Dorsolateral prefrontal cortex (tissue), 120 donors: ENCODE measurements at regions of chr16 and their contacts with region 1.

Region 1: DNA sequence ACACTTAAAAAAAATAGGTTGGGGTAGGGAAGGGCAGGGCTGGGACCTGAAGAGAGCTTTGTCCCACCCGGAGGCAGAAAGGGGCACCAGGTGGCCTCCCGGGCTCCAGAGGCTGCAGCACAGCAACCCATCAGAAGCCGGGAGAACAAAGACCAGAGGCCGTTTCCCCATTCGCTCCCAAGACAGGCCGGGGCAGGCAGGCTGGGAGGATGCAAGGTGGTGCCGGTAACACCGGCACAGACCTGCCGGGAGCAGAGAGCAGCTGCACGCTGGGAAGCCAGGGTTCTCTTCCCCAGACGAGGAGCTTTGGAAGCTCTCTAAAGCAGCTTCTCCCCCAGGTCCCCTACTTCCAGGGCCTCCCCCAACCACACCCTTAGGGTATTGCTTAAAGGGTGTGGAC is 5.6 kb downstream of the PPL start:
- DNase-seq: no peak
- H3K4me3 ChIP-seq: no peak overlapping the region
- H3K27ac ChIP-seq: no peak overlapping the region
- H3K27me3 ChIP-seq: peaks cover 0 to 11% (median 3%) of the 10 kb centered on the region in 45 donors
- CTCF ChIP-seq: no peak

Region 2: GRCh38 chr16:4859900-4860255 is 71.5 kb before region 1 on chr16:
- intact Hi-C with region 1: loop called in 1 of 2 experiments (anchors 5 kb)
- DNase-seq: peak in 1 of 10 donors; percentile 76
- H3K4me3 ChIP-seq: no peak overlapping the region
- H3K27ac ChIP-seq: peak overlapping the region in 3 of 59 donors; percentile 1 to 81 (median 14)
- H3K27me3 ChIP-seq: no peaks in the 10 kb centered on the region
- CTCF ChIP-seq: no peak

Region 3: DNA sequence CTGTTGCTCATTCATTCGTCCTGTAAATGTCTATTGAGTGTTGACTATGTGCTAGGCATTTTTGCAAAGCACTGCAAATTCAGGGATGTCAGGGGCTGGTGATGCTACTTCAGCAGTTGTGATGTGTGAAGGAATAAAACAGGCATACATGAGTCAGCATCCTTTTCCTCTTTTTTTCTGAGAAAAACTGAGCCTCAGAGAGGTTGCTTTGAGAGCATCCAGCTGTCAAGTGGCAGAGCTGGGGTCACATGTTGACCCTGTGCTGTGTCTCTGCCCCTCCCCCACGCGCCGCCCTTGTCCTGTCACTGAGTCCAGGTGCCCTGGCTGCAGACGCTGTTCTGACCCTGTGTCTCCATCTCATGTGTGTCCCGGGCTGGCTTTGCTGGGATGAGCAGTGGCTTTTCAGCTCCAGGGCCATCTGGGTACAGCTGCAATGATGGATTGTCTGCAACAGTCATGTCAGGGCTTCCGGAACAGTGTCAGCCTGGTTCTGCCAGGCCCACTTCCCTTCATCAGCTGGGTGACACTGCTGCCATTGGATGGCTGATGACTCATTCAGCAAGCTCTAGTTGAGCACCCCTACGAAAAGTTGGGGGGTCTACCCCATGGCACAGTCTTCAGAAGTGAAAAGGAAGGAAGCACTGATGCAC is 41.7 kb after region 1 on chr16:
- intact Hi-C with region 1: no loop called
- DNase-seq: peak in 9 of 10 donors; percentile 63 to 95 (median 85)
- H3K4me3 ChIP-seq: peak overlapping the region in 4 of 59 donors; percentile 2 to 21 (median 10)
- H3K27ac ChIP-seq: peak overlapping the region; percentile 52 to 98 (median 87)
- H3K27me3 ChIP-seq: no peaks in the 10 kb centered on the region
- CTCF ChIP-seq: peak in 1 of 56 donors; percentile 16